ENCODE measurements at regions of chr4 and their contacts with region 1.

Region 1: GRCh38 chr4:25159884-25160713 is at the start of gene SEPSECS:
- DNase-seq: peak; percentile 97
- ATAC-seq: peak; percentile 79
- H3K4me3 ChIP-seq: peak within 1 kb of the TSS; percentile 88 to 99 (median 96)
- H3K4me3 Mint-ChIP-seq: peak within 1 kb of the TSS; percentile 93
- H3K27ac ChIP-seq: peak within 1 kb of the TSS; percentile 92 to 98
- H3K27ac Mint-ChIP-seq: peak within 1 kb of the TSS; percentile 97
- H3K4me1 ChIP-seq: peaks cover 20 to 24% of the 10 kb centered on the region in 2 donors
- H3K4me1 Mint-ChIP-seq: peaks cover 40% of the 10 kb centered on the region
- H3K27me3 ChIP-seq: no peaks in the 10 kb centered on the region
- H3K27me3 Mint-ChIP-seq: no peaks in the 10 kb centered on the region
- CTCF ChIP-seq: no peak
- total RNA-seq, gene SEPSECS: 16.3 and 17.0 TPM in 2 replicates

Region 2: GRCh38 chr4:24584175-24584850 is 575.8 kb before region 1 on chr4 and contains the start of gene DHX15:
- CTCF ChIA-PET with region 1: no interaction called
- POLR2A ChIA-PET with region 1: no interaction called
- intact Hi-C with region 1: loop called (anchors 1 kb)
- DNase-seq: peak; percentile 96
- ATAC-seq: peak; percentile 94
- H3K4me3 ChIP-seq: peak within 1 kb of the TSS; percentile 78 to 100 (median 99)
- H3K4me3 Mint-ChIP-seq: peak within 1 kb of the TSS; percentile 94
- H3K27ac ChIP-seq: peak within 1 kb of the TSS; percentile 96 to 98
- H3K27ac Mint-ChIP-seq: peak within 1 kb of the TSS; percentile 97
- H3K4me1 ChIP-seq: peaks cover 17 to 19% of the 10 kb centered on the region in 2 donors
- H3K4me1 Mint-ChIP-seq: peaks cover 39% of the 10 kb centered on the region
- H3K27me3 ChIP-seq: no peaks in the 10 kb centered on the region
- H3K27me3 Mint-ChIP-seq: no peaks in the 10 kb centered on the region
- CTCF ChIP-seq: no peak
- total RNA-seq, gene DHX15: 154 and 162 TPM in 2 replicates

Region 3: DNA sequence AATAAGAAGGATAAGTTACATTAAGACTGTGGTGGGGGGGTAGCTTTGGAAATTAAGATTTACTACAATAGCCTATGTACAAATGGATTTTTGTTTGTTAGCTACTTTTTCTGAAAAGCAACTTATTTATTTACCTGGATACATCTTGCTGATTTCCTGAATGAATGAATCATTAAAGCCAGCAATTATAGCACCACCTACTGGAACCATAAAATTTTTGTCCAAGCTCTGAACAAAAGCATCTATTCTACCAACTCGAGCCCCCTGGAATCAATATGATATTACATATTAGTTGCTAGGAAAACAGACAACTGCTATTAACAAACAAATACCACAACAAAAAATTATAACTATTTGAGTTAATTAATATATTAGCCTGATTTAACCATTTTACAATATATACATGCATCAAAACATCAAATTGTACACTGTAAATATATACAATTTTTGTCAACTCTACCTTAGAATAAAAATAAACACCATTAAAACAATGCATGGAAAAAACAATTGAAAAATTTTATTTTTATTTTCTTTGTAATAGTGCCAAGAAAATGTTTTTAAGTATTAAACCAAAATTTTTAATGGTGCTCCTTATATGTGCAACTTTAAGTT is 15.1 kb before region 1 on chr4:
- CTCF ChIA-PET with region 1: interaction called, 10 read pairs
- POLR2A ChIA-PET with region 1: no interaction called
- intact Hi-C with region 1: no loop called
- DNase-seq: peak; percentile 15
- ATAC-seq: no peak
- H3K4me3 ChIP-seq: no peak overlapping the region
- H3K4me3 Mint-ChIP-seq: no peak overlapping the region
- H3K27ac ChIP-seq: no peak overlapping the region
- H3K27ac Mint-ChIP-seq: no peak overlapping the region
- H3K4me1 ChIP-seq: no peaks in the 10 kb centered on the region
- H3K4me1 Mint-ChIP-seq: peaks cover 3% of the 10 kb centered on the region
- H3K27me3 ChIP-seq: no peaks in the 10 kb centered on the region
- H3K27me3 Mint-ChIP-seq: no peaks in the 10 kb centered on the region
- CTCF ChIP-seq: peak; percentile 65

Region 4: GRCh38 chr4:25180524-25181131 is 20.5 kb after region 1 on chr4:
- CTCF ChIA-PET with region 1: interaction called, 5 read pairs
- POLR2A ChIA-PET with region 1: no interaction called
- intact Hi-C with region 1: loop called (anchors 2 kb)
- DNase-seq: peak; percentile 69
- ATAC-seq: peak; percentile 60
- H3K4me3 ChIP-seq: no peak overlapping the region
- H3K4me3 Mint-ChIP-seq: no peak overlapping the region
- H3K27ac ChIP-seq: no peak overlapping the region
- H3K27ac Mint-ChIP-seq: no peak overlapping the region
- H3K4me1 ChIP-seq: no peaks in the 10 kb centered on the region
- H3K4me1 Mint-ChIP-seq: no peaks in the 10 kb centered on the region
- H3K27me3 ChIP-seq: no peaks in the 10 kb centered on the region
- H3K27me3 Mint-ChIP-seq: no peaks in the 10 kb centered on the region
- CTCF ChIP-seq: peak; percentile 74

Region 5: DNA sequence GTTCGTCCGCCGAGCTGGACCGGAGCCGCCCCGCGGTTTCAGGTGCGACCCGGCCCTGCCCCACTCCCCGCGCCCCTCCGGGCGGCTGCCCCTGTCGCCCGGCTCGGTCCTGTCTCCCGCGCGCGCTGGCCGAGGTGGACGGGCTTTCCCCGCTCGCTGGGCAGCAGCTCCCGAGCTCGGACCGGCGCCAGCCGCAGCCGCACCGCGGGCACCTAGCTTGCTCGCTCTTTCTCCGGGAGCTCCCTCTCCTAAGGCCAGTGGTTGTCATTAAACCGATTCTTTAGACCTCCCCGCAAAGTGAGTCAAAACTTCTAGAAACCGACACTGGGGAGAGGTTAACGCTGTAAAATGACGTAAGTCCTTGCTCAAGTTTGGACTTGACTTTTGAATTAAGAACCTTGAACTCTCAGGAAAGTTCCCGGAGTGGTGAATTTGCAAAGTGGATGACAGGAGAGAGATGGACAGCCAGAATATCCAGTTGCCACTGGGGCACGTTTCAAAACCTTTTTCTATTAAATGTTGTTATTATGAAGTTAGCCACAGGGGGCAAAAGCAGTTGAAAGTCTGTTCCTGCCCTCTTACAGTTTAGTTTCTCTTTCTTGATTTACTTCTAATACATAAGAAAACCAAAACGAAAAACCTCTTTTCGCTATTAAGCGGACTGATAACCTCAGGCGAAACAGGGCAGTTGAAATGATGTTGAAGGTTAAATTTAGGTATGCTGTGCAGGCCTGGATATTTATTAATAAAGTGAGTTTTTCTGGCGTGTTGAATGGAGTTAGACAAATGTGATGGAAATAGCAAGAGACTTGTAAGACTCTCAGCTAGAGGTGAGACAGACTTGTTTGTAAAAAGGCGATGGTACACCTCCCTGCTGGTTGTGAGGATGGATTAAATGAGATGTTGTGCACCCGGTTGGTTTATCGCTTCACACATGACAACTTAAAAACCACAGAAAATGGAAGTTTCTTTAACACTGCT is 74.6 kb after region 1 on chr4:
- CTCF ChIA-PET with region 1: interaction called, 11 read pairs
- POLR2A ChIA-PET with region 1: interaction called, 12 read pairs
- intact Hi-C with region 1: loop called (anchors 1 kb)
- DNase-seq: peak; percentile 85
- ATAC-seq: peak; percentile 50
- H3K4me3 ChIP-seq: peak overlapping the region; percentile 72 to 91 (median 79)
- H3K4me3 Mint-ChIP-seq: peak overlapping the region; percentile 85
- H3K27ac ChIP-seq: peak overlapping the region; percentile 84 to 85
- H3K27ac Mint-ChIP-seq: peak overlapping the region; percentile 82
- H3K4me1 ChIP-seq: peaks cover 25 to 29% of the 10 kb centered on the region in 2 donors
- H3K4me1 Mint-ChIP-seq: peaks cover 39% of the 10 kb centered on the region
- H3K27me3 ChIP-seq: no peaks in the 10 kb centered on the region
- H3K27me3 Mint-ChIP-seq: no peaks in the 10 kb centered on the region
- CTCF ChIP-seq: peak; percentile 59

Region 6: GRCh38 chr4:25376754-25377571 is 216.9 kb after region 1 on chr4 and contains the start of gene ANAPC4:
- CTCF ChIA-PET with region 1: no interaction called
- POLR2A ChIA-PET with region 1: interaction called, 3 read pairs
- intact Hi-C with region 1: loop called (anchors 2 kb)
- DNase-seq: peak; percentile 96
- ATAC-seq: peak; percentile 96
- H3K4me3 ChIP-seq: peak within 1 kb of the TSS; percentile 76 to 92 (median 86)
- H3K4me3 Mint-ChIP-seq: no peak within 1 kb of the TSS
- H3K27ac ChIP-seq: peak within 1 kb of the TSS; percentile 28 to 64
- H3K27ac Mint-ChIP-seq: peak within 1 kb of the TSS; percentile 82
- H3K4me1 ChIP-seq: peaks cover 15 to 23% of the 10 kb centered on the region in 2 donors
- H3K4me1 Mint-ChIP-seq: peaks cover 9% of the 10 kb centered on the region
- H3K27me3 ChIP-seq: no peaks in the 10 kb centered on the region
- H3K27me3 Mint-ChIP-seq: no peaks in the 10 kb centered on the region
- CTCF ChIP-seq: peak; percentile 9
- total RNA-seq, gene ANAPC4: 52.6 and 62.5 TPM in 2 replicates

Region 7: GRCh38 chr4:25913851-25914669 is 754.0 kb after region 1 on chr4 and contains the start of gene SMIM20:
- CTCF ChIA-PET with region 1: no interaction called
- POLR2A ChIA-PET with region 1: no interaction called
- intact Hi-C with region 1: loop called (anchors 10 kb)
- DNase-seq: peak; percentile 95
- ATAC-seq: peak; percentile 94
- H3K4me3 ChIP-seq: peak within 1 kb of the TSS; percentile 89 to 95 (median 93)
- H3K4me3 Mint-ChIP-seq: peak within 1 kb of the TSS; percentile 95
- H3K27ac ChIP-seq: peak within 1 kb of the TSS; percentile 92 to 93
- H3K27ac Mint-ChIP-seq: peak within 1 kb of the TSS; percentile 97
- H3K4me1 ChIP-seq: peaks cover 27 to 35% of the 10 kb centered on the region in 2 donors
- H3K4me1 Mint-ChIP-seq: peaks cover 34% of the 10 kb centered on the region
- H3K27me3 ChIP-seq: no peaks in the 10 kb centered on the region
- H3K27me3 Mint-ChIP-seq: no peaks in the 10 kb centered on the region
- CTCF ChIP-seq: no peak
- total RNA-seq, gene SMIM20: 14.3 and 20.2 TPM in 2 replicates